Activated CD8-positive, alpha-beta memory T cell treated with anti-CD3 and anti-CD28 coated beads, Interleukin-2, amount 10 ng/mL, durations not matched to agents 7 days and 5 days (primary cell): ENCODE measurements at regions of chr3 and their contacts with region 1.

Region 1: DNA sequence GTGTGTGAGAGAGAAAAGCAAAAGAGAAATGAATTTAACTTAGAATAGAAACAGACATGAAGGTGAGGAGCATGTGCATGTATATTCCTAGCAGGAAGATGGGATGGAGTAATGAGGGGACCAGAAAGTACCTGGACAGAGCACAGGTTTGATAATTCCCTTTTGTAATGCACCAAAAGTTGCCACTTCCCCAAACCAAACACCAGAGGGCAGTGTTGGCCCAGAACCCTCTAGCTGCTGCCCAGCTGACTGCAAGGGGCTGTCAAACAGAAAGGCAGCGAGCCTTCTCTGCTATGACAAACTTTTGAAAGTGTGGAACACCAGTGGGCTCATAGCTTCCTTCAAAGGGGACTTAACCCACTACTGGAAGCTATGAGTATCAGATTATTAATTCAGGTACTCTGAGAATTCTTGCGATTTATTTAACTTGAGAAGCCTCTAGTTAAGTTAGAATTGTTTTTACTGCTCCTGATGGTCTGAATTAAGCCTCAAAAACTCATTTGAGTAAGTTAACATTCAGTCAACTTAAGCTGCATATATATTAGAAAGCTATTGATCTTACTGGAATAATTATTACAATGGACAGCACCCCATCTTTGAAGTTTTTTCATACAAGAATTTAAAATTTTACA is 234.9 kb downstream of the NEK10 start:
- DNase-seq: peak; percentile 76
- ATAC-seq: peak; percentile 78
- H3K4me3 Mint-ChIP-seq: no peak overlapping the region
- H3K27ac Mint-ChIP-seq: no peak overlapping the region
- H3K4me1 Mint-ChIP-seq: no peaks in the 10 kb centered on the region
- H3K27me3 Mint-ChIP-seq: no peaks in the 10 kb centered on the region

Region 2: GRCh38 chr3:27253831-27254230 is 119.5 kb after region 1 on chr3:
- CTCF ChIA-PET with region 1: interaction called, 15 read pairs
- DNase-seq: peak; percentile 44
- ATAC-seq: peak; percentile 69
- H3K4me3 Mint-ChIP-seq: no peak overlapping the region
- H3K27ac Mint-ChIP-seq: no peak overlapping the region
- H3K4me1 Mint-ChIP-seq: no peaks in the 10 kb centered on the region
- H3K27me3 Mint-ChIP-seq: peaks cover 7% of the 10 kb centered on the region

Region 3: DNA sequence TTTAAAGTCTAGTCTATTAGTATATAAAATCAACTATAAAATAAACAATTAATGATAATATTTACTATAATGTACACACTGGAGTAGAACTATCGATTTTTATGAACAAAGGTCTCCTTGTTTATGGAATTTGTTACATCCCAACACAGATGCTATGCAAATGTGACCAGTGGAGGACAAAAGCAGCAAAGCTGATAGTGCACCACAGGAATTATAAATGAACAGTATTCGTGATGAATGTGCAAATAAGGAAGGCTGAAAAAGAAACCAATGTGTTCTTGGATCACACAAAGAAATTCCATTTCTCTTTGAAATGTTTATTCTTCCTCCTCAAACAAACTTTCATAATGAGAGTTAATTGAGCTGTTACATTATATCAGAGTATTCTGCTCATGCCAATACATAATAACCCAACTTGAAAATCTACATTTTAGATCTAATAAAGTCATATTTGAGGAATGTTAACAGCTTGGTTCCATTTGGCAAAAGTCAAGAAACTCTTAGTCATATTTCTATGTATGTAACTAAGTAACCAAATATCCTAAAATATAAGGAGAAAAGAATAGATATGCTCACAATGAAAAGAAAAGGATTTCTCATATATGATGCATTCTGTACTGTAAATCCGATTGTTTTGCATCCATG is 155.6 kb after region 1 on chr3:
- CTCF ChIA-PET with region 1: no interaction called
- DNase-seq: no peak
- ATAC-seq: no peak
- H3K4me3 Mint-ChIP-seq: no peak overlapping the region
- H3K27ac Mint-ChIP-seq: no peak overlapping the region
- H3K4me1 Mint-ChIP-seq: no peaks in the 10 kb centered on the region
- H3K27me3 Mint-ChIP-seq: no peaks in the 10 kb centered on the region